ENCODE measurements at regions of chr1 and their contacts with region 1.

Region 1: GRCh38 chr1:221829327-221830015 is 87.6 kb upstream of the DUSP10 start:
- DNase-seq: peak; percentile 96
- H3K4me3 Mint-ChIP-seq: peak overlapping the region; percentile 5
- H3K27ac Mint-ChIP-seq: peak overlapping the region; percentile 79
- H3K4me1 Mint-ChIP-seq: peaks cover 69% of the 10 kb centered on the region
- H3K27me3 Mint-ChIP-seq: no peaks in the 10 kb centered on the region
- CTCF ChIP-seq: no peak

Region 2: GRCh38 chr1:221801773-221802516 is 27.5 kb before region 1 on chr1:
- CTCF ChIA-PET with region 1: interaction called, 4 read pairs
- POLR2A ChIA-PET with region 1: interaction called, 26 read pairs
- intact Hi-C with region 1: no loop called
- DNase-seq: peak; percentile 87
- H3K4me3 Mint-ChIP-seq: no peak overlapping the region
- H3K27ac Mint-ChIP-seq: peak overlapping the region; percentile 63
- H3K4me1 Mint-ChIP-seq: peaks cover 18% of the 10 kb centered on the region
- H3K27me3 Mint-ChIP-seq: no peaks in the 10 kb centered on the region
- CTCF ChIP-seq: no peak

Region 3: DNA sequence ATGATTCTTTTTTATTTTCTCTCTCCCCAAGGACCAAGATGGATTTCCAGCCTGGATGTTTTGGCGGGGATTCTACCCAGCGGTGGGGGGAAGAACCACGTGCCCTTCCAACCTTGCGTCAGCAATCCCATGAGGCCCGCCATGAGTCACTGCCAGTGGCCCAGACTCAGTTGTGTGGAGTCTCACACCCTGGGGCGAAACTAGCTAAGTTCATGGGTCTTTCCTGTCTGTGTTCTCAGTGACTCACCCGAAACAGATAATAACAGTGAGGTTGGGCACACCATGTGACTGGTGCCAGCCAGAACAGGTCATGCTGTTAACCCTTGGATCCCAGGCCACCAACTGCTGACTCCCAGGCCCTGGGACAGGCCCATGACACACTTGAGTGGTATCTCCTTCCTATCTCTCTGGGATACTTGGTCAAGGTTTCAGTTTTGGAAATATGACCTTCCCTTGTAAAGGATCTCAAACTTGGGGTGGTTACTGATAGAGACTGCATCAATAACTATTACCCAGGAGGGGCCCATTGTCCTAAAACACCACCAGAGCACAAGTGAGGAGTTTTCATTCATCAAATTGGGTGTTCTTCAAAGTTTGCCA is 10.4 kb after region 1 on chr1:
- CTCF ChIA-PET with region 1: interaction called, 5 read pairs
- POLR2A ChIA-PET with region 1: interaction called, 45 read pairs
- intact Hi-C with region 1: no loop called
- DNase-seq: peak; percentile 100
- H3K4me3 Mint-ChIP-seq: no peak overlapping the region
- H3K27ac Mint-ChIP-seq: peak overlapping the region; percentile 94
- H3K4me1 Mint-ChIP-seq: peaks cover 63% of the 10 kb centered on the region
- H3K27me3 Mint-ChIP-seq: no peaks in the 10 kb centered on the region
- CTCF ChIP-seq: no peak

Region 4: DNA sequence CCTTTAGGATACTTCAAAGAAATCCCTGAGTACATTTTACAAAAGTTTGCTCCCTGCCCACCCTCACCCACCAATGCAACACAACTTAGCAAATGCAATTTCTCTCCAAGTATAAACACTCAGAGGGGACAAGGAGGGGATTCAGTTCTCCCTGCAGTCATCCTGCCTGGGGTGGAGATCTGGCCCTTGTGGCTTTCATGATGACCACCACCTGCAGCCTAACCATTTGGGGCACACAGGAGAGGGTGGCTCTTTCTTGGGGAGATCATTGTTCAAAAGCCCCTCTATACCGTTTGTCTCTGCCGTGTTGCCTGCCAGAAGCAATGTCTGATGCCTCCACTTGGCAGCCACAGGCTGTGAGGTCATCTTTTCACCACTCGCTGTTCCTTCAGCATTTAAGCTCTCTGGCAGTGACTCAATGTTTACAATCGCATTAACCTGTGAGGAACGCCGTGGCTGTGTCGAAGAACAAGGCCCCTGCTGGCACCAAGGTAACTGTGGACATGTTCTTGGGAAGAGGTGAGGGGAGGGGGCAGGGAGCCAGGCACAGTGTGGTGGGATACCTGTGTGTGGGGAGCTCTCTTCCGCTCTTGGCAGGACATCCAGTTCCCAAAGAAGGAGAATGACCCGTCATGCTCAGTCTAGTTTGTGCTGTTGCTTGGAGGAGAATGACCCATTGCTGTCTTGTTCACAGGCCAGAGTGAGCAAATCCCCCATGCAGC is 16.3 kb after region 1 on chr1:
- CTCF ChIA-PET with region 1: interaction called, 4 read pairs
- POLR2A ChIA-PET with region 1: interaction called, 45 read pairs
- intact Hi-C with region 1: no loop called
- DNase-seq: peak; percentile 97
- H3K4me3 Mint-ChIP-seq: no peak overlapping the region
- H3K27ac Mint-ChIP-seq: peak overlapping the region; percentile 78
- H3K4me1 Mint-ChIP-seq: peaks cover 28% of the 10 kb centered on the region
- H3K27me3 Mint-ChIP-seq: no peaks in the 10 kb centered on the region
- CTCF ChIP-seq: no peak

Region 5: GRCh38 chr1:221868593-221869303 is 39.3 kb after region 1 on chr1:
- CTCF ChIA-PET with region 1: interaction called, 3 read pairs
- POLR2A ChIA-PET with region 1: interaction called, 15 read pairs
- intact Hi-C with region 1: no loop called
- DNase-seq: peak; percentile 83
- H3K4me3 Mint-ChIP-seq: no peak overlapping the region
- H3K27ac Mint-ChIP-seq: peak overlapping the region; percentile 26
- H3K4me1 Mint-ChIP-seq: peaks cover 25% of the 10 kb centered on the region
- H3K27me3 Mint-ChIP-seq: no peaks in the 10 kb centered on the region
- CTCF ChIP-seq: no peak

Region 6: GRCh38 chr1:222073307-222073995 is 244.0 kb after region 1 on chr1:
- CTCF ChIA-PET with region 1: no interaction called
- POLR2A ChIA-PET with region 1: no interaction called
- intact Hi-C with region 1: no loop called
- DNase-seq: no peak
- H3K4me3 Mint-ChIP-seq: no peak overlapping the region
- H3K27ac Mint-ChIP-seq: no peak overlapping the region
- H3K4me1 Mint-ChIP-seq: no peaks in the 10 kb centered on the region
- H3K27me3 Mint-ChIP-seq: no peaks in the 10 kb centered on the region
- CTCF ChIP-seq: no peak